CD8-positive, alpha-beta T cell (primary cell): ENCODE measurements at regions of chr15 and their contacts with region 1.

Region 1: DNA sequence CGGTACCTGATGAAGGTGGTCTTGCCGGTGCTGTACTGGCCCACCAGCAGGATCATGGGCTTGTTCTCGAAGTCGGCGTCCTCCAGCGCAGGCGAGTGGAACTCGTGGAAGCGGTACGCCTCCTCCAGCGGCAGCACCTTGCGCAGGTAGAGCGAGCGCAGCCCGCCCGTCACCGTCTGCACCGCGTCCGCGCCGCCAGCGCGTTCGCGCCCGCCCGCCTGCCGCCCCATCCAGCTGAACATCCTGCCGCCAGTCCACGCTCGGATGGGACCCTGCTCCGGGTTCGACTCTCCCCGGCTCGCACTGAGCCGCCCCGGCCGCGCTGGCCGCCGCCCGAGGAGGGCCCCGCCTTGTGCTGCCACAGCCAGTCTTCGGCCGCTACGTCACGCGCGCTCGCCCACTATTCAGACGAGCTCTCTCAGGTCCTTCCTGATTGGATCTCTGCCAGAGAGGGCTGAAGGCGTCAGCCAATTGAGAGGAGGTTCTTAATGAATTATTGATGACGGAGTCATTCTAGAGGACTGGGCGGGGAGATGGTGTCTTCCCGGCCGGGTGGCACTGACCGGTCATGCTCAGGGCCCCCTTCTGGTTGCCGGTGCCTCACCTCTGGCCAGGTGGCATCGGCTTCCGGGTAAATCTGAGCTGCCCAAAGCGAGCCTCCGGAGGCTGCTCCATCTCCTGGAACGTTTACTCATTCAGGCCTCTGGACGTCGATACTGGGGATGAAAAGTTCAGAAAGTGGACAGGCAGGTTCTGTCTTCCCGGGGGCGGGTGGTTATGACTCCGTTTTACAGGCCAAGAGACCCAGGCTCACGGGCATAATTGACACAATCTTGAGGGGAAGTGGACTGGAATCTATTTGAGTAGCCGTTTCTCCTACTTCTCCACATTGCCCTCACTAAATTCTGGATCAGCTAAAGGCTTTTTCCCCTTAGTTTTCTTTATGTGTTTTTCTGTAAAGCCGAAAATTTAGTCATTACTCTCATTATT is at the start of gene EHD4:
- DNase-seq: peak; percentile 85 to 98 (median 94)
- ATAC-seq: peak; percentile 81
- H3K4me3 ChIP-seq: peak within 1 kb of the TSS; percentile 69 to 77
- H3K4me3 Mint-ChIP-seq: peak within 1 kb of the TSS; percentile 97
- H3K27ac ChIP-seq: peak within 1 kb of the TSS; percentile 83 to 86
- H3K27ac Mint-ChIP-seq: peak within 1 kb of the TSS; percentile 97
- H3K4me1 ChIP-seq: peaks cover 21% of the 10 kb centered on the region
- H3K4me1 Mint-ChIP-seq: peaks cover 44% of the 10 kb centered on the region
- H3K27me3 ChIP-seq: peaks cover 0 to 4% of the 10 kb centered on the region in 2 experiments
- H3K27me3 Mint-ChIP-seq: peaks cover 5% of the 10 kb centered on the region
- CTCF ChIP-seq: no peak
- total RNA-seq, gene EHD4: 36.4 to 40.5 TPM

Region 2: GRCh38 chr15:41331833-41332787 is 640.4 kb before region 1 on chr15 and contains the start of gene OIP5:
- CTCF ChIA-PET with region 1: no interaction called
- POLR2A ChIA-PET with region 1: no interaction called
- intact Hi-C with region 1: loop called (anchors 2 to 5 kb)
- DNase-seq: peak; percentile 95 to 100 (median 96)
- ATAC-seq: peak; percentile 96
- H3K4me3 ChIP-seq: peak within 1 kb of the TSS; percentile 84 to 94
- H3K4me3 Mint-ChIP-seq: peak within 1 kb of the TSS; percentile 97
- H3K27ac ChIP-seq: peak within 1 kb of the TSS; percentile 46 to 63
- H3K27ac Mint-ChIP-seq: peak within 1 kb of the TSS; percentile 87
- H3K4me1 ChIP-seq: peaks cover 14% of the 10 kb centered on the region
- H3K4me1 Mint-ChIP-seq: peaks cover 30% of the 10 kb centered on the region
- H3K27me3 ChIP-seq: no peaks in the 10 kb centered on the region
- H3K27me3 Mint-ChIP-seq: no peaks in the 10 kb centered on the region
- CTCF ChIP-seq: peak; percentile 58
- total RNA-seq, gene OIP5: not detected

Region 3: GRCh38 chr15:41827880-41828806 is 144.4 kb before region 1 on chr15 and contains the start of gene JMJD7:
- CTCF ChIA-PET with region 1: no interaction called
- POLR2A ChIA-PET with region 1: interaction called, 3 read pairs
- intact Hi-C with region 1: loop called (anchors 1 to 5 kb)
- DNase-seq: peak; percentile 93 to 98 (median 95)
- ATAC-seq: peak; percentile 97
- H3K4me3 ChIP-seq: peak within 1 kb of the TSS; percentile 93 to 95
- H3K4me3 Mint-ChIP-seq: peak within 1 kb of the TSS; percentile 83
- H3K27ac ChIP-seq: peak within 1 kb of the TSS; percentile 74 to 87
- H3K27ac Mint-ChIP-seq: peak within 1 kb of the TSS; percentile 87
- H3K4me1 ChIP-seq: peaks cover 35% of the 10 kb centered on the region
- H3K4me1 Mint-ChIP-seq: peaks cover 44% of the 10 kb centered on the region
- H3K27me3 ChIP-seq: no peaks in the 10 kb centered on the region
- H3K27me3 Mint-ChIP-seq: no peaks in the 10 kb centered on the region
- CTCF ChIP-seq: no peak
- total RNA-seq, gene JMJD7: 27.5 to 38.3 TPM

Region 4: DNA sequence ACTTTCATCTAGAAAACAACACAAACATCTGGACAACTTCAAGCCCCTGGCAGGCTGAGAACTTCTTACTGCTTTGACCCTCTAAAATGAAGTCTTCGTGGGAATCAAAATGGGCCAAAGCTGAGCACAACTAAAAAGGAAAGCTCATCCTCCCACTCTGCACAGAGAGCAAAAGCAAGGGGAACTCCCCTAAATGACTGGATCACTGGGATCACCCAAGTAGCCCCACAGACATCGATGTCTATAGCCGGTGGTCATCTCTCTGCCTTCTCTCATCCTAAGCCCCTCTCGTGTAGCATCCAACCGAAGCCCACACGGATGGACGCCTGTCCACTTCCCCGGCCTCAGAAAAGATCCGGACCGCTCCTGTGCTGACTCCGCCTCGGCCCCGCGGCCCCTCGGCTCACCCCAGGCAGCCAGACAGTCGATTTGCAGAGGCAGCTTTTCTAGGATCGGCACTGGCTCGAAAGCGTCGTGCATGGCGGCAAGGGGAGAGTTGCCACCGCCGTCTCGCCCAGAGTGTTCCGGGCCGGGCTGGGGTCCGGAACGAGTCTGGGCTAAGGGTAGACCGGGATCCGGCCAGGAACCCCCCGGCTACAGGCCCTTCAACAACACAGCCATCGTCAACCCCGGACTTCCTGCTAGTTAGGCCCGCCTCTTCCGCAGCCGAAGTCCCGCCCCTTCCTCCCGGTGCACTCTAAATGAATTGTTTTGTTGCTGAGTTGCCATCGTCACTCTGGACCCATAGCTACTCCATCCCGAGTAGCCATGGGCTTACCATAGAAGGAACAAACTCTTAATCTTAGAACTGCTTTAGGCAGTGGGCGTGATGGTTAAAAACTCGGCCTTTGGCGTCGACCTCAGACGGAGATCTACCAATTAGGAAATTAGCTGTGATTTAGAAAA is 235.4 kb after region 1 on chr15 and contains the start of gene VPS39:
- CTCF ChIA-PET with region 1: no interaction called
- POLR2A ChIA-PET with region 1: no interaction called
- intact Hi-C with region 1: loop called in 1 of 2 experiments (anchors 2 kb)
- DNase-seq: peak; percentile 65 to 90 (median 85)
- ATAC-seq: peak; percentile 98
- H3K4me3 ChIP-seq: peak within 1 kb of the TSS; percentile 73 to 96
- H3K4me3 Mint-ChIP-seq: peak within 1 kb of the TSS; percentile 97
- H3K27ac ChIP-seq: peak within 1 kb of the TSS; percentile 83 to 84
- H3K27ac Mint-ChIP-seq: peak within 1 kb of the TSS; percentile 95
- H3K4me1 ChIP-seq: peaks cover 23% of the 10 kb centered on the region
- H3K4me1 Mint-ChIP-seq: peaks cover 40% of the 10 kb centered on the region
- H3K27me3 ChIP-seq: no peaks in the 10 kb centered on the region
- H3K27me3 Mint-ChIP-seq: no peaks in the 10 kb centered on the region
- CTCF ChIP-seq: no peak
- total RNA-seq, gene VPS39: 81.5 to 82.9 TPM

Region 5: GRCh38 chr15:43749690-43750345 is 1777.3 kb after region 1 on chr15:
- CTCF ChIA-PET with region 1: no interaction called
- POLR2A ChIA-PET with region 1: no interaction called
- intact Hi-C with region 1: loop called in 1 of 2 experiments (anchors 5 kb)
- DNase-seq: peak in 5 of 9 experiments; percentile 21 to 91 (median 59)
- ATAC-seq: peak; percentile 53
- H3K4me3 ChIP-seq: peak overlapping the region; percentile 52 to 53
- H3K4me3 Mint-ChIP-seq: peak overlapping the region; percentile 78
- H3K27ac ChIP-seq: peak overlapping the region; percentile 58 to 81
- H3K27ac Mint-ChIP-seq: peak overlapping the region; percentile 92
- H3K4me1 ChIP-seq: peaks cover 60% of the 10 kb centered on the region
- H3K4me1 Mint-ChIP-seq: peaks cover 62% of the 10 kb centered on the region
- H3K27me3 ChIP-seq: no peaks in the 10 kb centered on the region
- H3K27me3 Mint-ChIP-seq: no peaks in the 10 kb centered on the region
- CTCF ChIP-seq: no peak